A673 (cell line): ENCODE measurements at regions of chr12 and their contacts with region 1.

Region 1: GRCh38 chr12:64187794-64188193 is 34.3 kb downstream of the KICS2 start:
- DNase-seq: no peak
- H3K4me3 ChIP-seq: no peak overlapping the region
- H3K27ac ChIP-seq: peak overlapping the region; percentile 8
- H3K4me1 ChIP-seq: peaks cover 23% of the 10 kb centered on the region
- H3K27me3 ChIP-seq: no peaks in the 10 kb centered on the region
- CTCF ChIP-seq: no peak

Region 2: DNA sequence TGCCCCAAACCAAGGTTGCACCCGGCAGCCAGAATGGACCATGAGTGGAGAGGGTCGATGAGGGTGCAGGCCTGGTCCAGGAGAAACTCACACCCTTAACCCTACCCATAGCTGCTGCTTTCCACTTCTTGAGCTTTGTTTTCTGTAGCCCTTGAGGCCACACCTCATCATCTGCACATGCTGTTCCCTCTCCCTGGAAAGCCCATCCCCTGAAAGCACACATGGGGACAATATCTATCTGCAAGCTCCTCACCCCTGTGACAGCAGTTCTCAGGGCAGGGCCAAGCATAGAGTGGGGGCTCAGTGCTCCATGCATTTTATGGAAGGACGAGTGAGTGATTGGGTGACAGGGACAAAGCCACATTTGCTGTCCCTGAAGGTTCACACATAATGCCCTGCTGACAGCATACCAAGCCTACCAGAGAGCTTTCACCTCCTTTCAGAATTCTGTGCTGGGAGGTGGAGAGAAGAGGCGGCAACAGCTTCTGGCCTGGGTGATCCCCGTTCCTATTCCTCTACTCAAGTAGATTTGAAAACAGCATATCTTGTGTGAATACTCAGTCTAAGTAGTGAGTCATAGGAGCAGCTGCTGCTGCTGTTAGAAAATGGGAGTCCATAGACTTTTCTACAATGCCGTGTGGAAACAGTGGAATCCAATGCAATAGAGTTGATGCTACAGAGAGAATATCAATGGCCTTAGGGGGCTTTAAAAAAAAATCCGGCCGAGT is 298.7 kb before region 1 on chr12:
- CTCF ChIA-PET with region 1: no interaction called
- POLR2A ChIA-PET with region 1: no interaction called
- intact Hi-C with region 1: no loop called
- DNase-seq: no peak
- H3K4me3 ChIP-seq: no peak overlapping the region
- H3K27ac ChIP-seq: no peak overlapping the region
- H3K4me1 ChIP-seq: peaks cover 8% of the 10 kb centered on the region
- H3K27me3 ChIP-seq: no peaks in the 10 kb centered on the region
- CTCF ChIP-seq: no peak

Region 3: GRCh38 chr12:64212119-64212746 is 24.4 kb after region 1 on chr12:
- CTCF ChIA-PET with region 1: no interaction called
- POLR2A ChIA-PET with region 1: no interaction called
- intact Hi-C with region 1: loop called (anchors 1 kb)
- DNase-seq: no peak
- H3K4me3 ChIP-seq: no peak overlapping the region
- H3K27ac ChIP-seq: no peak overlapping the region
- H3K4me1 ChIP-seq: no peaks in the 10 kb centered on the region
- H3K27me3 ChIP-seq: no peaks in the 10 kb centered on the region
- CTCF ChIP-seq: no peak

Region 4: DNA sequence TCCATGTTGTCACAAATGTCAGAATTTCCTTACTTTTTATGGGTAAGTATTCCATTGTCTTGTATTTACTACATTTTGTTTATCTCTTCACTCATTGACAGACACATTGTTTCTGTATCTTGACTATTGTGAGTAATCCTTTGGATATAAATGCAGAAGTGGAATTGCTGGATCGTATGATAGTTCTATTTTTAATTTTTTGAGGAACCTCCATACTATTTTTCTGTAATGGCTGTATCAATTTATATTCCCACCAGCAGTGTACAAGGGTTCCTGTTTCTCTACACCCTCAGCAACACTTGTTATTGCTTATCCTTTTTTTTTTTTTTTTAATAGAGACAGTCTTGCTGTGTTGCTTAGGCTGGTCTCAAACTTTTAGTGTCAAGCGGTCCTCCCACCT is 37.8 kb after region 1 on chr12:
- CTCF ChIA-PET with region 1: no interaction called
- POLR2A ChIA-PET with region 1: no interaction called
- intact Hi-C with region 1: no loop called
- DNase-seq: no peak
- H3K4me3 ChIP-seq: no peak overlapping the region
- H3K27ac ChIP-seq: no peak overlapping the region
- H3K4me1 ChIP-seq: peaks cover 9% of the 10 kb centered on the region
- H3K27me3 ChIP-seq: no peaks in the 10 kb centered on the region
- CTCF ChIP-seq: no peak

Region 5: GRCh38 chr12:64332938-64333337 is 145.1 kb after region 1 on chr12:
- CTCF ChIA-PET with region 1: no interaction called
- POLR2A ChIA-PET with region 1: no interaction called
- intact Hi-C with region 1: no loop called
- DNase-seq: no peak
- H3K4me3 ChIP-seq: no peak overlapping the region
- H3K27ac ChIP-seq: no peak overlapping the region
- H3K4me1 ChIP-seq: no peaks in the 10 kb centered on the region
- H3K27me3 ChIP-seq: no peaks in the 10 kb centered on the region
- CTCF ChIP-seq: no peak

Region 6: GRCh38 chr12:64923536-64923935 is 735.7 kb after region 1 on chr12:
- CTCF ChIA-PET with region 1: no interaction called
- POLR2A ChIA-PET with region 1: no interaction called
- intact Hi-C with region 1: no loop called
- DNase-seq: no peak
- H3K4me3 ChIP-seq: no peak overlapping the region
- H3K27ac ChIP-seq: no peak overlapping the region
- H3K4me1 ChIP-seq: no peaks in the 10 kb centered on the region
- H3K27me3 ChIP-seq: peaks cover 31% of the 10 kb centered on the region
- CTCF ChIP-seq: no peak